CD8-positive, alpha-beta T cell (primary cell): ENCODE measurements at regions of chr13 and their contacts with region 1.

Region 1: GRCh38 chr13:26051657-26052311 is at the start of gene SHISA2:
- DNase-seq: peak in 4 of 9 experiments; percentile 61 to 74 (median 70)
- ATAC-seq: peak; percentile 69
- H3K4me3 ChIP-seq: peak within 1 kb of the TSS; percentile 42
- H3K4me3 Mint-ChIP-seq: peak within 1 kb of the TSS; percentile 81
- H3K27ac ChIP-seq: no peak within 1 kb of the TSS
- H3K27ac Mint-ChIP-seq: peak within 1 kb of the TSS; percentile 45
- H3K4me1 ChIP-seq: peaks cover 28% of the 10 kb centered on the region
- H3K4me1 Mint-ChIP-seq: peaks cover 15% of the 10 kb centered on the region
- H3K27me3 ChIP-seq: peaks cover 7 to 9% of the 10 kb centered on the region in 2 experiments
- H3K27me3 Mint-ChIP-seq: peaks cover 20% of the 10 kb centered on the region
- CTCF ChIP-seq: no peak
- total RNA-seq, gene SHISA2: 6.4 to 6.8 TPM

Region 2: GRCh38 chr13:25286969-25287961 is 764.5 kb before region 1 on chr13 and contains the start of gene MTMR6:
- CTCF ChIA-PET with region 1: no interaction called
- POLR2A ChIA-PET with region 1: no interaction called
- intact Hi-C with region 1: no loop called
- DNase-seq: peak; percentile 90 to 98 (median 94)
- ATAC-seq: peak; percentile 81
- H3K4me3 ChIP-seq: peak within 1 kb of the TSS; percentile 83 to 95
- H3K4me3 Mint-ChIP-seq: peak within 1 kb of the TSS; percentile 98
- H3K27ac ChIP-seq: peak within 1 kb of the TSS; percentile 94 to 97
- H3K27ac Mint-ChIP-seq: peak within 1 kb of the TSS; percentile 99
- H3K4me1 ChIP-seq: peaks cover 23% of the 10 kb centered on the region
- H3K4me1 Mint-ChIP-seq: peaks cover 41% of the 10 kb centered on the region
- H3K27me3 ChIP-seq: peaks cover 0 to 2% of the 10 kb centered on the region in 2 experiments
- H3K27me3 Mint-ChIP-seq: peaks cover 10% of the 10 kb centered on the region
- CTCF ChIP-seq: peak; percentile 99
- total RNA-seq, gene MTMR6: 41.9 to 44.4 TPM

Region 3: DNA sequence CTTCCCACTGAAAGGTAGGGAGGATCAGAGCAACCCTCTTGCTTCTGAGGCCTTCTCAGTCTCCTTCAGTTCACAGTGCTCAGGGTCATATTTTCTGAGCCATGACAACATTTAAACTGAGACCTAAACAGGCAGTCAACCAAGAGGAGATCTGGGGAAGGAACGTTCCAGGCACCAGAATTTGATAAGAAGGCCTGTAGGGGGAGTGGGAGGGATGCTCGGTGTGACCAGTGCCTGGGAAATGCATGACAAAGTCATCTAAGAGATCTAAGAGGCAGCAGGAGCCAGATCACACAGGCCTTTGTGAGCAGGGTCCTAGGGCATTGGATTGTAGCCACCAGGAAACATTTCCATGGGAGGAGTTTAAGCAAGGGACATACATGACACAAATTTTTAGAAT is 71.5 kb before region 1 on chr13:
- CTCF ChIA-PET with region 1: no interaction called
- POLR2A ChIA-PET with region 1: no interaction called
- intact Hi-C with region 1: loop called in 1 of 2 experiments (anchors 10 kb)
- DNase-seq: peak in 1 of 9 experiments; percentile 35
- ATAC-seq: peak; percentile 40
- H3K4me3 ChIP-seq: no peak overlapping the region
- H3K4me3 Mint-ChIP-seq: no peak overlapping the region
- H3K27ac ChIP-seq: no peak overlapping the region
- H3K27ac Mint-ChIP-seq: no peak overlapping the region
- H3K4me1 ChIP-seq: peaks cover 4% of the 10 kb centered on the region
- H3K4me1 Mint-ChIP-seq: peaks cover 15% of the 10 kb centered on the region
- H3K27me3 ChIP-seq: no peaks in the 10 kb centered on the region
- H3K27me3 Mint-ChIP-seq: no peaks in the 10 kb centered on the region
- CTCF ChIP-seq: no peak